GM13977 (cell line): ENCODE measurements at regions of chr2 and their contacts with region 1.

Region 1: GRCh38 chr2:131488306-131489205 is 3.6 kb downstream of the MZT2A start:
- DNase-seq: no peak
- CTCF ChIP-seq: no peak

Region 2: GRCh38 chr2:130186391-130186790 is 1302.2 kb before region 1 on chr2:
- in situ Hi-C with region 1: loop called (anchors 5 kb)
- DNase-seq: no peak
- CTCF ChIP-seq: no peak

Region 3: GRCh38 chr2:131027566-131028440 is 460.8 kb before region 1 on chr2:
- in situ Hi-C with region 1: no loop called
- DNase-seq: no peak
- CTCF ChIP-seq: no peak

Region 4: GRCh38 chr2:131349021-131349420 is 139.5 kb before region 1 on chr2:
- in situ Hi-C with region 1: no loop called
- DNase-seq: no peak
- CTCF ChIP-seq: no peak